ENCODE measurements at regions of chr1 and their contacts with region 1.

Region 1: GRCh38 chr1:211476200-211476849 is 15.6 kb downstream of the RD3 start:
- DNase-seq: peak; percentile 76
- H3K4me3 ChIP-seq: no peak overlapping the region
- H3K27ac ChIP-seq: no peak overlapping the region
- H3K4me1 ChIP-seq: peaks cover 0 to 4% of the 10 kb centered on the region in 2 experiments; a peak in 2 of 4 replicates
- H3K27me3 ChIP-seq: no peaks in the 10 kb centered on the region
- CTCF ChIP-seq: peak; percentile 96
- EP300 ChIP-seq: no peak
- RAD21 ChIP-seq: peak; percentile 64

Region 2: DNA sequence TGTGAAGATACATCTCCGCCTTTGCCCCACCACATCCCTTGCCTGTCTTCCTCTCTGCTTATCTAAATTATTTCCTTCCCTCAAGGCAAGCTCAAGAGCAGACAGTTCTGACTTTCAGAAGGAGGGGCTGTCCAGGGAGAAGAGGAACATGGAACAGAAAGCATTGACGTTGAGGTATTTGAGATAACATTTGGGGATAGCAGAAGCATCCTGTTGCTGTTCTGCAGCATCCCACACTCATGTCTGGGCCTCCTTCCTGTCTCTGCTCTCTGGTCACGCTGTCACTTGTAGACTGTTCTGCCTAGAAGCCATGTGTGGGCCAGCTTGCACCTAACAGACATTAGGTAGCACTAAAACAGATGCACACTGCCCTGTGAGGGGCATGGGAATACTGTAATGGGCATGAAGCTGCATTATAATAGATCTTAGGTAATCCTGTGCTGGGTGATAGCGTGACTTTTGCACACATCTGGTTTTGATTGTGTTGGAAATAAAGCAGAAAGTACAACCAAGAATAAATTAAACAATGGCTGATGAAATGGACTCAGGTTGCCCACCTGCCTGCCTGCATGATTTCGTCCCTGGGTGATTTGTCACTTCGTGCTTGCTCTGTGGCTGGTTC is 16.3 kb after region 1 on chr1:
- CTCF ChIA-PET with region 1: interaction called, 101 read pairs
- POLR2A ChIA-PET with region 1: interaction called, 4 read pairs
- DNase-seq: peak; percentile 66
- H3K4me3 ChIP-seq: no peak overlapping the region
- H3K27ac ChIP-seq: peak overlapping the region in 1 of 2 experiments; percentile 98; a peak in 2 of 4 replicates
- H3K4me1 ChIP-seq: peaks cover 0 to 59% of the 10 kb centered on the region in 2 experiments; a peak in 2 of 4 replicates
- H3K27me3 ChIP-seq: no peaks in the 10 kb centered on the region
- CTCF ChIP-seq: no peak
- EP300 ChIP-seq: peak in 1 of 2 experiments; percentile 69; a peak in 2 of 4 replicates
- RAD21 ChIP-seq: no peak

Region 3: DNA sequence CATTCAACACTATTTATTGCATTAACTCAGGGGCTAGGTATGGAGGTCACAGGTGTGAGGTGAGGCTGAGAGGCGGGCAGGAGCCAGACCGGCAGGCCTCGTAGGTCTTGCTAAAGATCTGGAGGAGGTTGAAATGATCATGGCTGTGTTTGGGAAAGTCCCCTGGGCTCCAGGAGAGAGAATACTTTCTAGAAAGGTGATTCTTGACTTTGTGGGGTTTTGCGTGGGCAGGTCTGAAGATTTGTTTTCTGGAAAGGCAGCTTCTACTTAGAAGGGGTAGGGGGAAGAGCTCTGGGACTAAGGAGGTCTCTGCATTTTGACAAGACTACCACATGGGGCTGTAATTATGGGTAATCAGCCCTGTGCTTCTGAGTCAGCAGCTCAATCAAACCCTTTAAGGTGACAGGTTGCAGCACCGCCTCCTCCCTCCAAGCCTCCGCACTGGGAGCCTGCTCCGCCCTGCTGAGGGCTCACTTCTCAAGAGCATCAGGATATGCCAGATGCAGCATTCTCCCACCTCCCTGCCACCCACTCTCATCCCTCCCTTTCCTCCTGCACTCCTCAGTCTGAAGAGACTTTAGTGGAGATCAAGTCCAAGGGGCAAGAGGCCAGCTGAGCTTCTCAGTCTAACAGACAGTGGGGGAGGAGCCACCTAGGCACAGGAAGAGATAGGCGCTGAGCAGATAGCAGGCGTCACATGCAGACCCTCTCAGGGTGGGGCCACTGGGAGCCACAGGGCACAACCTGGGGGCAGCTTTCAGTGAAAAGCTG is 72.2 kb after region 1 on chr1:
- CTCF ChIA-PET with region 1: no interaction called
- POLR2A ChIA-PET with region 1: no interaction called
- DNase-seq: no peak
- H3K4me3 ChIP-seq: no peak overlapping the region
- H3K27ac ChIP-seq: no peak overlapping the region
- H3K4me1 ChIP-seq: 0 out of 4 replicates have a peak, but pooled peaks cover 0 to 6% of the 10 kb centered on the region in 2 experiments
- H3K27me3 ChIP-seq: no peaks in the 10 kb centered on the region
- CTCF ChIP-seq: no peak
- EP300 ChIP-seq: no peak
- RAD21 ChIP-seq: no peak